ENCODE measurements at regions of chr16 and their contacts with region 1.

Region 1: DNA sequence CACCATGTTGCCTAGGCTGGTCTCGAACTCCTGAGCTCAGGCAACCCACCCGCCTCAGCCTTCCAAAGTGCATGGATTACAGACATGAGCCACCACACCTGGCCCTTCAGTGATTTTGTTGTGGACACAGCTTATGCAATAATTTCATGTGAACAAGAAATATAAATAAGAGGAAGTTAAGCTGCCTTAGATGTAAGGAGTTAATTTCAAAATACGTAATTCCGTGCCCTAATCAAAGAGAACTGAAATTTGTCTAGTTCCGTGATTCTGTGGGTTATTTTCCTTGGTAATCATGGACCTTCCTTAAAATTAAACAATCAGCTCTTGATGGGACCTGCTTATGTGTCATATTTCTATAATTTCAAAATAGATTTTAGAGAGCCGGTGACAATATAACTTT is 11.9 kb downstream of the TVP23A start:
- DNase-seq: no peak
- ATAC-seq: no peak
- H3K4me3 ChIP-seq: no peak overlapping the region
- H3K27ac ChIP-seq: no peak overlapping the region
- H3K4me1 ChIP-seq: no peaks in the 10 kb centered on the region
- H3K27me3 ChIP-seq: no peaks in the 10 kb centered on the region
- CTCF ChIP-seq: no peak

Region 2: DNA sequence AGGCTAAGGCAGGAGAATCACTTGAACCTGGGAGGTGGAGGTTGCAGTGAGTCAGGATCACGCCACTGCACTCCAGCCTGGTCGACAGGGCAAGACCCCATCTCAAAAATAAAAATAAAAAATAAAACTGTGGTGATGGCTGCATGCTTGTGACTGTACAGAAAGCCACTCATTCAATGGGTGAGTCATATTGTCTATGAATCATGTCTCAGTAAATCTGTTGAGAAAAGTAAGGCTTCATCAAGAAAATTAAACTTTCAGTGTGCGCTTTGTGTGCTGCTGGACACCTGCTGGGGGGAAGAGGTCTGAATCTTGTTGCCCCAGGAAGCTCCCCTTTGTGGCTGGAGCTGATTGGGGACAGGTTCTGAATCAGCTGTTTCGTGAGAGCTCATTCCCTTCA is 51.8 kb before region 1 on chr16:
- intact Hi-C with region 1: loop called in 1 of 2 experiments (anchors 5 kb)
- DNase-seq: no peak
- ATAC-seq: no peak
- H3K4me3 ChIP-seq: no peak overlapping the region
- H3K27ac ChIP-seq: no peak overlapping the region
- H3K4me1 ChIP-seq: no peaks in the 10 kb centered on the region
- H3K27me3 ChIP-seq: no peaks in the 10 kb centered on the region
- CTCF ChIP-seq: no peak

Measured in psoas muscle (tissue), 8 donors.